BJ (cell line): ENCODE measurements at regions of chr10 and their contacts with region 1.

Region 1: GRCh38 chr10:104300736-104301292 is 31.8 kb downstream of the GSTO2 start:
- DNase-seq: peak; percentile 94
- H3K4me3 ChIP-seq: no peak overlapping the region
- H3K27me3 ChIP-seq: no peaks in the 10 kb centered on the region
- CTCF ChIP-seq: no peak

Region 2: DNA sequence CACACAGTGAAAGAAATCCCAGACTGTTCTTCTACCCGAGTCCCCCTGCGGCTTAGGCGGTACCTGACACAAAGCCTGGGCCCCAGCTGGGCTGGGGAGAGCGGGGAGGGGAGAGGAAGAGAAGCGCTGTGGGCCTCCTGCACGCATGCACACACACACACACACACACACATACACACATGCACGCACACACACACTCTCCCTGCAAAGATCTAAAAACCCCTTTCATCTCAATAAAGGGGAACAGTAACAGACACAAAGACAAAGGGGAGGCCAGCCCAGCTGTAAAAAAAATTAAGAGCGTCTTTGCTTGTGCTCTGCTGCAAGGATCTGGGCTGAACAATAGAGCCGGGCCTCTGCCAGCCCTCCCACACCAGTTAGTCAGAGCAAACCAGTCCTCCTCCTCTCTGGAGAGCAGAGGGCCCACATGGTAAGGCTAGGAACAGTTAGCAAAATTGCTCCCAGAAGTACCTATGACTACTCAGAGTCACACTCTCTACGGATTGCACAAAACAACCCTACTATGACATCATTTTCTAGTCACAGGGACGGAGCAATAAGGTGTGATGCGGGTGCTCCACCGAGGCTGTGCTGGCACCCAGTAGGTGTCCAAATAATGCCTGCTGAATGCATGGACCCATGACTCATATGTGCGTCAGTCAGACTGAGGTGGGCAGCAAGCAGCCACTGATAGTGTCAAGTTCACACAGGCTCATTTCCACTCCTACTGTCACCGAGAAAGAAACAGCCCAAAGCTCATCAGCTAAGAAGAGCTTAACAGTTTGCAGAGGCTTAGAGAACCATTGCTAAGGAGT is 28.3 kb after region 1 on chr10:
- CTCF ChIA-PET with region 1: interaction called, 11 read pairs
- POLR2A ChIA-PET with region 1: interaction called, 14 read pairs
- DNase-seq: peak; percentile 77
- H3K4me3 ChIP-seq: peak overlapping the region; percentile 15; the same call in 1 of the 2 replicates
- H3K27me3 ChIP-seq: no peaks in the 10 kb centered on the region
- CTCF ChIP-seq: no peak